ENCODE measurements at regions of chr4 and their contacts with region 1.

Region 1: DNA sequence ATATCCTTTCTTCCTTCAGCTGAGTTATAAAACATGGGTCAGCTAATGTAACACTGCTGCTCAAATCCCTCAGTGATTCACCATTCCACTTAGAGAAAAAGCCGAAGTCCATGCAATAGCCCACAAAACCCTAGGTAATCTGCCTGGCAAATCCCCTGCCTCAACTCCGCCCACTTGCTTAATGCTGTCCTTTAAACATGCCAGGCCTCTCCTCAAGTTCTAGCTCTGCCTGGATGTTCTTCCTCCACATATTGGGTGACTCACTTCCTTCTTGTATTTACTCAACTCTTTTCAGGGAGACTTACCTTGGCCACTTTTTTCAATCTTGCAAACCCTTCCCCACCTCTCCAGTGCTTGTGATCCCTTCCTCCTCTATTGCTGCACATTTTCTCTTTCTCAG is 89.8 kb downstream of the EMCN start:
- ATAC-seq: no peak
- H3K4me3 ChIP-seq: no peak overlapping the region
- H3K27ac ChIP-seq: no peak overlapping the region
- H3K4me1 ChIP-seq: no peaks in the 10 kb centered on the region

Region 2: GRCh38 chr4:100106982-100107381 is 321.1 kb before region 1 on chr4:
- in situ Hi-C with region 1: no loop called
- ATAC-seq: no peak
- H3K4me3 ChIP-seq: no peak overlapping the region
- H3K27ac ChIP-seq: no peak overlapping the region
- H3K4me1 ChIP-seq: no peaks in the 10 kb centered on the region

Region 3: DNA sequence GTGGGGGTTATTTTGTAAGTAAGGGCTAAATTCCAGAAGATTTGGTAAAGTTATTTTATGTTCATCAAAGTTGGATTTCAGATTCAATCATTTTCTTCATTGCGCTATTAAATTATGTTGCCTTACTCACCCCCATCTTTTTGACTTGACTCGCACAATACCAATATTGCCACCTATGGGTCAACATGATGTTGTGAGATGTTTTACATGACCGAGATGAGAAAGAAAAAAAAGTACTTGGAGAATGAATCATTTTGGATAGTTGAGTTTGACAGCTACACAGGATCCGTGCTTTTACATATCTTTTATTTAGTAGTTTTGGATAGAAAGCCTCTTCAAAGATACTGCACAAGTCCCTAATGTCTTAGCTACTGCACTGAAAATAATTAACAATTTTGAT is 314.0 kb after region 1 on chr4:
- in situ Hi-C with region 1: loop called in 1 of 9 experiments (anchors 25 kb)
- ATAC-seq: peak in 2 of 8 experiments; percentile 15 to 33
- H3K4me3 ChIP-seq: no peak overlapping the region
- H3K27ac ChIP-seq: no peak overlapping the region
- H3K4me1 ChIP-seq: no peaks in the 10 kb centered on the region